AG04450 (cell line): ENCODE measurements at regions of chr10 and their contacts with region 1.

Region 1: GRCh38 chr10:52215745-52216361 is 98.2 kb upstream of the DKK1 start:
- DNase-seq: peak; percentile 53
- H3K4me3 ChIP-seq: no peak overlapping the region
- H3K27ac ChIP-seq: no peak overlapping the region
- H3K27me3 ChIP-seq: no peaks in the 10 kb centered on the region
- CTCF ChIP-seq: peak; percentile 73

Region 2: GRCh38 chr10:51001587-51001986 is 1214.3 kb before region 1 on chr10:
- CTCF ChIA-PET with region 1: interaction called, 13 read pairs
- POLR2A ChIA-PET with region 1: no interaction called
- DNase-seq: no peak
- H3K4me3 ChIP-seq: no peak overlapping the region
- H3K27ac ChIP-seq: no peak overlapping the region
- H3K27me3 ChIP-seq: no peaks in the 10 kb centered on the region
- CTCF ChIP-seq: peak; percentile 68

Region 3: GRCh38 chr10:51063659-51064535 is 1152.0 kb before region 1 on chr10:
- CTCF ChIA-PET with region 1: interaction called, 22 read pairs
- POLR2A ChIA-PET with region 1: no interaction called
- DNase-seq: peak; percentile 26
- H3K4me3 ChIP-seq: no peak overlapping the region
- H3K27ac ChIP-seq: no peak overlapping the region
- H3K27me3 ChIP-seq: no peaks in the 10 kb centered on the region
- CTCF ChIP-seq: peak; percentile 65

Region 4: GRCh38 chr10:51960494-51960895 is 255.4 kb before region 1 on chr10:
- CTCF ChIA-PET with region 1: interaction called, 19 read pairs
- POLR2A ChIA-PET with region 1: no interaction called
- DNase-seq: peak; percentile 33
- H3K4me3 ChIP-seq: no peak overlapping the region
- H3K27ac ChIP-seq: no peak overlapping the region
- H3K27me3 ChIP-seq: no peaks in the 10 kb centered on the region
- CTCF ChIP-seq: peak; percentile 59

Region 5: DNA sequence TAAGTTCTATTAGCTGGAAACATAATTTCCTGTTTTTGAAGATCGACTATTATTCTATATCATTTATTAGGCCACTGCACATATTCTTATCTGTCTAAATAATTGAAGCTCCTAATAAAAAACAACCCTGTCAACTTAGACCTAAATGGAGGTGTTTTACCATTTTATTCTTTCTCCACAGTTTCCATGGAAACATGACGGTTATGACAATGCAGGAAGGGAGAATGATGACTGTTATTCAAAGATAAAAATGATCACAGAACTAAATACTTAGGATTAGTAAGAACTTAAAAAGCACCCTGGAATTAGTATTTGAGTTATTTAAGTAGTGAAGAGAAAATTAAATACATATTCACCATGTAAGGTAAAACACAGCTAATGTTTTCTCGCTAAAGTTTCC is 21.7 kb before region 1 on chr10:
- CTCF ChIA-PET with region 1: interaction called, 10 read pairs
- POLR2A ChIA-PET with region 1: no interaction called
- DNase-seq: no peak
- H3K4me3 ChIP-seq: no peak overlapping the region
- H3K27ac ChIP-seq: no peak overlapping the region
- H3K27me3 ChIP-seq: no peaks in the 10 kb centered on the region
- CTCF ChIP-seq: no peak

Region 6: GRCh38 chr10:52226197-52226847 is 10.5 kb after region 1 on chr10:
- CTCF ChIA-PET with region 1: interaction called, 13 read pairs
- POLR2A ChIA-PET with region 1: no interaction called
- DNase-seq: no peak
- H3K4me3 ChIP-seq: no peak overlapping the region
- H3K27ac ChIP-seq: no peak overlapping the region
- H3K27me3 ChIP-seq: no peaks in the 10 kb centered on the region
- CTCF ChIP-seq: no peak

Region 7: GRCh38 chr10:52597189-52597863 is 381.5 kb after region 1 on chr10:
- CTCF ChIA-PET with region 1: interaction called, 10 read pairs
- POLR2A ChIA-PET with region 1: no interaction called
- DNase-seq: no peak
- H3K4me3 ChIP-seq: peak overlapping the region; percentile 37
- H3K27ac ChIP-seq: no peak overlapping the region
- H3K27me3 ChIP-seq: no peaks in the 10 kb centered on the region
- CTCF ChIP-seq: no peak